ENCODE measurements at regions of chr2 and their contacts with region 1.

Region 1: GRCh38 chr2:216698895-216699294 is 3.5 kb upstream of the IGFBP5 start:
- DNase-seq: peak in 2 of 5 donors; percentile 33 to 50
- H3K4me3 ChIP-seq: no peak overlapping the region
- H3K27ac ChIP-seq: peak overlapping the region in 1 of 2 donors; percentile 73
- H3K4me1 ChIP-seq: peaks cover 23% of the 10 kb centered on the region
- H3K27me3 ChIP-seq: no peaks in the 10 kb centered on the region
- CTCF ChIP-seq: peak; percentile 49 to 88 (median 79)
- EP300 ChIP-seq: no peak
- POLR2A ChIP-seq: no peak

Region 2: GRCh38 chr2:216857131-216857550 is 158.2 kb after region 1 on chr2:
- intact Hi-C with region 1: loop called in 1 of 4 experiments (anchors 5 kb)
- DNase-seq: no peak
- H3K4me3 ChIP-seq: no peak overlapping the region
- H3K27ac ChIP-seq: no peak overlapping the region
- H3K4me1 ChIP-seq: peaks cover 15% of the 10 kb centered on the region
- H3K27me3 ChIP-seq: no peaks in the 10 kb centered on the region
- CTCF ChIP-seq: no peak
- EP300 ChIP-seq: no peak
- POLR2A ChIP-seq: no peak

Region 3: DNA sequence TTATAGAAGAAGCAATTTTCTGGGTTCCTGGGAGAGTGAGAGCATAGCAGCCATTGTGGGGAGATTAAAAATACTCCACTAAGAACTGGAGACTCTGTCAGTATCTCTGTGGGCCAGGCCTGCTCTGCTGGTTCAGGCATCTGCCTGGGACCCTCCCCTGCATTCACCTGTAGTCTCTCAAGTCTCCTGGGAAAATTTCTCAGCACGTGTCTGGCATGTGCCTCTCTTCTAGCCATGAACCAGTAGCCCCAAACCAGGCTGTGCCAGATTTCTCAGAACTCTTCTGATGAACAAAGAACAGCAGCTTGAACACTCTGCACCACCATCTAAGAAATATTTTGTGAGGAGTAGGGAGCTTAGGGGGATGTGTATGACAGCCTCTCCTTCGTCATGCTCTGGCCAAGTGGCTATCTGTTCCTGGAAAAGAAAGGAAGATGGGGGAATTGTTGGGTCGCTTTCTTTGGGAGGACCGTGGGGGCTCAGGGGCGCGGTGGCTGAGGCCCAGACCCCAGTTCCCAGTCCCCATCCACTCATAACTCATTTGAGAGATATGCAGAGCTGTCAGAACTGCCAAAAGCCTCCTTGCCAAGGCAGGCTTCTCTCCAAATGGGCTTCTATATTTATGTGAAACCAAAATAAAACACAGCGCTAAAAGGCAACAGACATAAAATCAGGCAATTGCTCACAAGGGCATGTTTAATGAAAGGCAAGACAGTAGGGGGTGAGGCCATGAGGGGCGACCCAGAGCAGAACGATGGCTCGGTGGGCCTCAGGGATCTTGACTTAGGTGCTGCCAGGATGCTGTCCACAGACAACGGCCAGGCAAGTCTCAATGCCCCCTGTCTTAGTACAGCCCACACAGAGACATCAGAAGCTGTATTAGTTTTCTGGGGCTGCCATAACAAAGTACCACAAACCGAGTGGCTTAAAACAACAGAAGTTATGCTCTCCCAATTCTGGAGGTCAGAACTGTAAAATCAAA is 275.7 kb after region 1 on chr2:
- intact Hi-C with region 1: loop called in 2 of 4 experiments (anchors 5 to 10 kb)
- DNase-seq: peak; percentile 65 to 84 (median 73)
- H3K4me3 ChIP-seq: no peak overlapping the region
- H3K27ac ChIP-seq: peak overlapping the region; percentile 35 to 91
- H3K4me1 ChIP-seq: peaks cover 27% of the 10 kb centered on the region
- H3K27me3 ChIP-seq: no peaks in the 10 kb centered on the region
- CTCF ChIP-seq: no peak
- EP300 ChIP-seq: peak; percentile 28
- POLR2A ChIP-seq: no peak

Region 4: GRCh38 chr2:217186668-217187159 is 487.8 kb after region 1 on chr2:
- intact Hi-C with region 1: loop called in 2 of 4 experiments (anchors 10 kb)
- DNase-seq: peak in 2 of 5 donors; percentile 53 to 70
- H3K4me3 ChIP-seq: no peak overlapping the region
- H3K27ac ChIP-seq: peak overlapping the region in 1 of 2 donors; percentile 13
- H3K4me1 ChIP-seq: peaks cover 9% of the 10 kb centered on the region
- H3K27me3 ChIP-seq: no peaks in the 10 kb centered on the region
- CTCF ChIP-seq: no peak
- EP300 ChIP-seq: peak; percentile 85
- POLR2A ChIP-seq: no peak

Region 5: DNA sequence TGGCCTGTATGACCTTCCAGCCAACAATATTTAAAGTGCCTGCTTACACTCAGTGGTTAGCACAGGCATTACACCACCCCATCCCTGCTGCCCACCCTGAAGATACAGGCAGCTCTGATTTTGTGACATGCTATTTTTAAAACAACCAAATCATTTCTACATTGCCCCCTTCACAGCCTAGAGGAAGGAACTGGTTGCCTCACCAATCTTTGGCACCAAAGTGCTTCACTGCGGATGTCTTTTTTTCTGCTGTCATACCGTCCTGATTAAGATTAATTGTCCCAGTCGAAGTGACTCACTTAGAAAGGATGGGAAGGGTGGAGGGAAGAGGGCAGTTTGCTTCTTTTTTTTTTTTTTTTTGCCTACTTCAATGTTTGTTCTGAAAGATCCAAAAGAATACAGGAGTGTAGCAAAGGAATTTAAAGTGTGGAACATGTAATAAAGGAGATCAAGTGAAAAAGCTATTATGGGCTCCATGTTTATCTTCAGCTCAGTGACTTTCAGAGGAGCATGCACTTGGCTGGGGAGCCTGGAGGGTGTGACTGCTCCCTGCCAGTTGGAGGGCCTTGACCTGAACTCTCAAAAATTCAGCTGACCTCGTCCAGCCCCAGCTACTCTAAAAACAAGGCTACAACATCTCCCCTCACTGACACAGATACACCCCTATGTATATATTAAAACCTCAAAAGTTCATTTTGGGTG is 662.0 kb after region 1 on chr2:
- intact Hi-C with region 1: loop called in 1 of 4 experiments (anchors 10 kb)
- DNase-seq: peak in 4 of 5 donors; percentile 45 to 65 (median 60)
- H3K4me3 ChIP-seq: no peak overlapping the region
- H3K27ac ChIP-seq: peak overlapping the region in 1 of 2 donors; percentile 42
- H3K4me1 ChIP-seq: peaks cover 40% of the 10 kb centered on the region
- H3K27me3 ChIP-seq: no peaks in the 10 kb centered on the region
- CTCF ChIP-seq: peak in 1 of 3 donors; percentile 6
- EP300 ChIP-seq: no peak
- POLR2A ChIP-seq: no peak

Region 6: DNA sequence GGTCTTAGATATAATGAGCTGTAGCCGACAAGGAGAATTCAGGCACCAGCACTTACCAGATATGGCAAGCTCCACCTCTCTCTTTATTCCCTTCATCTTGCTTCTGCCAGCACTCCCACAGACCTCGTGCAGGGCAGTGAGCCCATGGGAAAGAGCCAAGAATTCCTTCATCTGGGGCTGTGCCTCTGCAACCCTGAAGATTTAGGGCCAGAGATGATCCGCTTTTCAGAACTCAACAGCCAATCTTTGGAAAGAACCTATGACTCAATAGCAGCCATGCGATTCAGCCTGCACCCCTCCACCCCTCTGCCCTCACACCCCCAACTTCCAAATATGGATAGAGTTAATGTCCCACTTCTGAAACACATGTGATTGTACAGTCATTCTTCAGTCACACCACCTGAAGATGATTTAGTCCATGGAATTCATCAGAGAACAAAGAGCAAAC is 694.7 kb after region 1 on chr2:
- intact Hi-C with region 1: loop called in 2 of 4 experiments (anchors 5 to 10 kb)
- DNase-seq: peak; percentile 82 to 90 (median 84)
- H3K4me3 ChIP-seq: no peak overlapping the region
- H3K27ac ChIP-seq: no peak overlapping the region
- H3K4me1 ChIP-seq: peaks cover 18% of the 10 kb centered on the region
- H3K27me3 ChIP-seq: no peaks in the 10 kb centered on the region
- CTCF ChIP-seq: no peak
- EP300 ChIP-seq: no peak
- POLR2A ChIP-seq: no peak

Region 7: GRCh38 chr2:217713395-217714286 is 1014.7 kb after region 1 on chr2:
- intact Hi-C with region 1: loop called (anchors 5 kb)
- DNase-seq: peak; percentile 73 to 89 (median 84)
- H3K4me3 ChIP-seq: no peak overlapping the region
- H3K27ac ChIP-seq: peak overlapping the region in 1 of 2 donors; percentile 2
- H3K4me1 ChIP-seq: peaks cover 11% of the 10 kb centered on the region
- H3K27me3 ChIP-seq: no peaks in the 10 kb centered on the region
- CTCF ChIP-seq: peak; percentile 94 to 95 (median 95)
- EP300 ChIP-seq: no peak
- POLR2A ChIP-seq: no peak

Measured in ovary (tissue), 10 donors.